ENCODE measurements at regions of chr1 and their contacts with region 1.

Region 1: DNA sequence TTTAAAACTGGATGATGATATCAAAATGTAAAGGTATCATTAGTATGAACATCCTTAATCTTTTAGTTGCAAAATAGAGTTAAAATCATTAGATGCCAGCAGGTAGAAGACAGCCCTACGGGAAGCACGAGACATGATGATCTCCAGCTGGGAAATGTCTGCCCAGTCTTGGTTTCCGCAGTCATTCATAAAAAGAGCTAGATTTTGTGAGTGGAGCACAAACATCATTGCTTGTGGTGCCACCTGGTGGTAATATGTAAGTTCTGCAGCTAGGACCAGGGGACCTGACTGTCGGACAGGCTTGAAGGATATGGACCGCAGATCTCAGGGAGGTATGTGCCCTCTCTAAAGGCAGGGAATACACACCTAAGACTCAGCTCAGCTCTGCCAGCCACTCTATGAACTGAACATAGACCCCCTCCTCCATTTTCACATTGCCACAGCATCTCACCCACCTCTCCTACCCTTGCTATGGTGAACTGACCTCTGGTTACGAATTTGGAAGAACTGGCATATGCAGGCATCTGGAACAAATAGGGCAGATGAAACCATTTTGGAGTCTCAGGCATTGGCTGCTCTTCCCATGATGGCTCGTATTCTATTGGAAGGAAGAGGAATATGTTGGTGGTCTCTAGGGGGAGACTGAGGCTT is 9.2 kb downstream of the FCMR start:
- DNase-seq: peak; percentile 57 to 72
- H3K4me3 ChIP-seq: no peak overlapping the region
- H3K4me1 ChIP-seq: no peaks in the 10 kb centered on the region
- H3K27me3 ChIP-seq: peaks cover 11% of the 10 kb centered on the region

Region 2: DNA sequence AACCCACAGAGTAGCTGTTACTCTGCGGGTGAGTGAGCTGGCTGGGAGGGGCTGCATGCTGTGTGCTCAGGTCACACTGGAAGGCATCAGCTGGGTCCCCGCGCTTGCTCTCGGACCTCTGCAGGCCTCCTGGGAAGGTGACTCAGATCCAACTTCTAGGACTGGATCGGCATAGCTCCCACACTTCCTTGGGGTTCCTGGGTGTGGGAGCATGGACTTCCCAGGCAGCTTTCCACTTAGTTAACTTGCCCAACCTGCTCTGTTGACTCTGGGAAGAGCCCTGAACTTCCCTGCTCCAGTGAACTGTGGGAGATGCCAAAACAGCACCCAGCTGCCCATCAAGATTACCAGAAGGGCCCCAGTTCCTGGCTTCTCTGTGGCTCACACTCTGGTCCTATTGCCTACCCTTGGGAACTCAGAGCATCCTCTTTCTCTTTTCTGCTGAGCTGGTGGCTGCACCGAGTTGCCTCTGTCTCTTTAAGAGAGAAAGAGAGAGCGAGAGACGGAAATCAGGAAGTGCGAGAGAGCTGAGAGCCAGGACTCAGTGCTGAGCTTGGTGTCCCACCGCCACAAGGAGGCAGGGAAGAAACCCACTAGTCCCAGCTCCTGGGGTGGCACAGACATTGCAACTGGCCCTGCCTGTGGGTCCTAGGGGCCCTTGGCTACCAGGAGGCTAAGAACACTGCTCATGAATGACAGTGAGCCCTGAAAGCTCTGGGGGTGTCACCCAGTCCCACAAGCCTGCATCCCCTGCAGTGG is 442.5 kb before region 1 on chr1 and contains the start of gene IKBKE:
- in situ Hi-C with region 1: loop called (anchors 10 kb)
- DNase-seq: peak; percentile 21 to 56
- H3K4me3 ChIP-seq: peak within 1 kb of the TSS; percentile 27
- H3K4me1 ChIP-seq: peaks cover 6% of the 10 kb centered on the region; the same call in 1 of the 2 replicates
- H3K27me3 ChIP-seq: no peaks in the 10 kb centered on the region

Region 3: DNA sequence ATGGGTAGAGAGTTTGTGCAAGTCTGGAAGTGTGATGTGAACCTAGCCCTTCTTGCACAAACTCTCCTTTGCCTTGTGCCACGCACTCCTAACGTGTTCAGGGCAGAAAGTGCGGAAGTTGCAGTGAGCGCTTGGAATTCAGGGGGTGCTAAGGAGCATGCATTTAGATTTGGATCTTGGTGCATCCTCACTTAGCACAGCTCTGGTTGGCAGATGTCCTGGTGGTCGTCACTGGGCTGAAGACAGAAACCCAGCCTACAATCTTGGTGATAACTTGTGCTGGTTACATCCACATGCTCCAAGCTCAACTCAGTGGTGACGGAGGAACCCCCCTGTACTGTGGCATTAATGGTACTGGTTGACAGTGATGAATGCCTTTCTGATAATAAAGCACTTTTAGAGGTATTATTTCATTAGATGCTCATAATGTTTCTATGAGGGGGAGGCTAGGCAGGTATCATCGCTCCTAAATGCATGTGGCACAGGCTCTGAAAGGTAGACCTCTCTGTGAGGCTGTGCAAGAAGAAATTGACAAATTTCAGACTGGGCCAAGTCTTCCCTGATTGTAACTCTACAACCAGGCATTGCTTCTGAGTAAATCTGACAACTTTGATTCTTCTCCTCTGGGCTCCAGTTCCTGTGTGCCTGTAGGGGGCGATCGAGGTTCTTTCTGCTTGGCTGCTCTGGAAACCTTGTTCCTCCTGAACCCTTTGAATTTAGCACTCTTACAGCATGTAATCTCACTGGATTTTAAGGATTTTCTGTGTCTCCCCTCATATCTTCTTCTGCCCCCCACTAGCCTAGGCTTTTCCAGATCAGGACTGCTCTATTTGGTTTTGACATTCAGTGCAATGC is 187.2 kb before region 1 on chr1:
- in situ Hi-C with region 1: loop called (anchors 5 kb)
- DNase-seq: peak; percentile 41 to 76
- H3K4me3 ChIP-seq: no peak overlapping the region
- H3K4me1 ChIP-seq: no peaks in the 10 kb centered on the region
- H3K27me3 ChIP-seq: no peaks in the 10 kb centered on the region

Region 4: GRCh38 chr1:206784471-206784903 is 128.1 kb before region 1 on chr1:
- in situ Hi-C with region 1: no loop called
- DNase-seq: no peak
- H3K4me3 ChIP-seq: no peak overlapping the region
- H3K4me1 ChIP-seq: no peaks in the 10 kb centered on the region
- H3K27me3 ChIP-seq: no peaks in the 10 kb centered on the region

Region 5: GRCh38 chr1:207088731-207089626 is 176.4 kb after region 1 on chr1 and contains the start of gene C4BPB:
- in situ Hi-C with region 1: no loop called
- DNase-seq: no peak
- H3K4me3 ChIP-seq: no peak within 1 kb of the TSS
- H3K4me1 ChIP-seq: peaks cover 7% of the 10 kb centered on the region
- H3K27me3 ChIP-seq: no peaks in the 10 kb centered on the region; the same call in 1 of the 2 replicates

Region 6: DNA sequence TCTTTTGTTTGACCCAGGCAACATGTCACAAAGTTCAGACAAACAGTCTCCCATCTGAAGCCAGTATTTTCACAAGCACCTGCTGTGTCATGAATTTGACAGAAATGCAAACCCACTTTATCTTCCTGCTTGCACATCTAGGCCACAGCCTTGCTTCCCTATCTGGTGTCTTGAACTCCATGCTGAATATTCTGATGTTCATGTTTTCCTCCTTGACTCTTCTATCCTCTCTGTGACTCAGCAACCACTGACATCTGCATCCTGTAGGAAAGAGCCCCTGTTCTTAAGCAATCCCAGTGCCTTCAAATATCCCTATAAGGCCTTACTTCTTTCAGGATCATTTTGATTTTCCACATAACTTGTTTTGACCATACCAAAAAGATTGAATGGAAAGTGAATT is 415.4 kb after region 1 on chr1:
- in situ Hi-C with region 1: no loop called
- DNase-seq: no peak
- H3K4me3 ChIP-seq: no peak overlapping the region
- H3K4me1 ChIP-seq: peaks cover 5% of the 10 kb centered on the region; the same call in 1 of the 2 replicates
- H3K27me3 ChIP-seq: no peaks in the 10 kb centered on the region

Measured in HAP-1 (cell line).